Posterior vena cava (tissue), 2 donors: ENCODE measurements at regions of chr4 and their contacts with region 1.

Region 1: DNA sequence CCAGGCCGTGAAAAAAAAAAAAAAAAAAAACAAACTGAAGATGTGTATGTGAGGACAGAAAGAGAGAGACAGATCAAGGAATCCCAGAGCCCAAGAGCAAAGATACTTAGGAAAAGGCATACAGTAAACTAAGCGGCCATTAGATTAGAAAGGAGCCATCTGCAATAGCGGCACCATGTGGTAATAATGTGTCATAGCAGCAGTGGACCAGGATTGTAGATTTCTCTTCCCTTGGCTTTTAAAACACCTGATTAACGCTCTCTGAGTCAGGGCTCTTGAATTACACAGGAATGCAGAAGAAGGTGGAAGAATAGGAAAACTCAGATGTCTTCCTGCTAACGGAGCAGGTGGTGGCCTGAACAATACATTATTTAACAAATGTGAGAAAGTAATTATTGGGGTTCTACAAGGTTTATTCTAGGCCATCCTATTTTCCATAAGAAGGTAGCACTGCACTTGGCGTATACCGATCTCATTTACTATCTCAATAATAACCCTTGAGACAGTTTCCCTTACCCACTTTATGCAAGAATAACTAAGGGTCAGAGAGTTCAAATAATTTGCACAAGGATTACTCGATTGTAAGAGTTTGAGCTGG is 182.7 kb downstream of the KCNIP4 start:
- DNase-seq: no peak

Region 2: GRCh38 chr4:20428436-20429160 is 1337.3 kb before region 1 on chr4:
- intact Hi-C with region 1: loop called in 1 of 2 experiments (anchors 5 kb)
- DNase-seq: no peak

Region 3: DNA sequence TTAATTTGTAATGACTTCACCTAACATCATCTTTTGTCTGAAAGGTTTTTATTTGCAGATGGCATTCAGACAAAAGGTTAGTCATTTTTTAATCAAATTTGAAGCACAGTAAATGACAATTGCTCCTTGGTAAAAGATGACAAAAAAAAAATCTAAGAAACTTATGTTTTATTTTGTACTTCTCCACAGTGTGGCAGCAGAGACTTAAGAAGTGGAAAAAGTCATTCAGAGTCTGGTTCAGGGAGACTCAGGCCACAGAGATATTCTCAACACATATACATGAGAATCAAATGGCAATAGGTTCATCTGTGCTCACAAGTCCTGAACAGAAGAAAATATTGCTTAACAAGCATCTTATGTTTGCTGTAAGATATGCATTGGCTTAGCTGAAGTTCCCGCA is 253.6 kb before region 1 on chr4:
- intact Hi-C with region 1: loop called in 1 of 2 experiments (anchors 5 kb)
- DNase-seq: no peak

Region 4: GRCh38 chr4:21697583-21697982 is 68.3 kb before region 1 on chr4:
- intact Hi-C with region 1: no loop called
- DNase-seq: no peak